A549 (cell line): ENCODE measurements at regions of chr2 and their contacts with region 1.

Region 1: GRCh38 chr2:199739413-199740110 is 111.4 kb downstream of the FTCDNL1 start:
- DNase-seq: peak; percentile 28 to 65
- ATAC-seq: peak; percentile 58 to 88; a peak in 4 of 6 replicates
- H3K4me3 ChIP-seq: no peak overlapping the region
- H3K27ac ChIP-seq: peak overlapping the region; percentile 36 to 61; a peak in 3 of 6 replicates
- H3K4me1 ChIP-seq: peaks cover 22% of the 10 kb centered on the region
- CTCF ChIP-seq: peak; percentile 88
- EP300 ChIP-seq: no peak
- POLR2A ChIP-seq: no peak
- RAD21 ChIP-seq: peak; percentile 92

Region 2: DNA sequence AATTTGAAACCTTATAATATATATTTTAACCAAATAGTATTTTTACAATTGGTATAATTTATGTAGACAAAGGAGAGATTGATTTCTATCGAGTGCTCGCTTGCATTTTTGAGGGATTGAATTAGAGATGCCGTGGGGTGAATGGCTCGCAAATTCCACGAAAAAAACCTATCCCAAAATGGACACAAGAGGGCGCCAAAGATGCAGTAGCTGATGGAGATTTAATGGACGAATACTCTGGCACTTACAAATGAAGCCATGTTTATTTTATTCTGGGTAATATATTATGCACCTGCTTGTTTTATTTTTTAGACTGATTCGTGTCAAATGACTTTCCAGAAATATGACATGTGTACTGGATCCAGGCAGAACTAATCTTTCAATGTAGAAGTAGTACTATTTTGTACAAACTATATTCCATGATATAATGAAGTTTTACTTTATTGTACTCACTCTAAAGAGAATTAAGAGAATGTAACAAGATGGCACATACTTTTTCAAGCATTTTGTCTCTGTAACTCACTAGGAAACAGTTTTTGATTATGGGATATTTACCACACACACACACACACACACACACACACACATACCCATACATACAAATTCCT is 1429.8 kb before region 1 on chr2:
- CTCF ChIA-PET with region 1: interaction called, 32 read pairs
- POLR2A ChIA-PET with region 1: no interaction called
- DNase-seq: peak; percentile 37
- ATAC-seq: peak in 1 of 2 experiments; percentile 77; a peak in 3 of 6 replicates
- H3K4me3 ChIP-seq: no peak overlapping the region
- H3K27ac ChIP-seq: no peak overlapping the region
- H3K4me1 ChIP-seq: no peaks in the 10 kb centered on the region
- CTCF ChIP-seq: peak; percentile 82
- EP300 ChIP-seq: no peak
- POLR2A ChIP-seq: no peak
- RAD21 ChIP-seq: peak; percentile 58 to 62; a peak in 4 of 5 replicates

Region 3: DNA sequence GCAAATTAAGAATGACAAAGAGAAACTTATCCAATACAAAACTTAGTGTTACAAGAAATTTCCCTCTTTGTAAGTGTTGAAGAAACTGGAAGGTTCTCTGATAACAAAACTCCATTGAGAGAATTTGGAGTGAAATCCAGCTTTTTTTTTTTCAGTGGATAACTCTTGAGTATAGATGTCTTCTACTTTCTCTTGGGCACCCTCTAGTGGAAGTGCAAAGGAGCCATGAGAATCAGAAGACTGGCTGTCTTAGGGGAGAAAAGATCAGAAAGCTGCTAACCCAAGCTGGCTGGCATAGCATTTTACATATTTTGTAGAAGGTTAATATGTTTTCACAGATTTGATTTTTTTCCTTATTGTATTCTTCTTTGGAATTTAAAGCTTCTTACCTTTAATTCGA is 143.0 kb before region 1 on chr2:
- CTCF ChIA-PET with region 1: interaction called, 10 read pairs
- POLR2A ChIA-PET with region 1: no interaction called
- DNase-seq: peak; percentile 6 to 44
- ATAC-seq: peak; percentile 71 to 89; a peak in 4 of 6 replicates
- H3K4me3 ChIP-seq: no peak overlapping the region
- H3K27ac ChIP-seq: no peak overlapping the region
- H3K4me1 ChIP-seq: no peaks in the 10 kb centered on the region
- CTCF ChIP-seq: peak; percentile 54
- EP300 ChIP-seq: no peak
- POLR2A ChIP-seq: no peak
- RAD21 ChIP-seq: peak; percentile 32 to 37; a peak in 2 of 5 replicates

Region 4: DNA sequence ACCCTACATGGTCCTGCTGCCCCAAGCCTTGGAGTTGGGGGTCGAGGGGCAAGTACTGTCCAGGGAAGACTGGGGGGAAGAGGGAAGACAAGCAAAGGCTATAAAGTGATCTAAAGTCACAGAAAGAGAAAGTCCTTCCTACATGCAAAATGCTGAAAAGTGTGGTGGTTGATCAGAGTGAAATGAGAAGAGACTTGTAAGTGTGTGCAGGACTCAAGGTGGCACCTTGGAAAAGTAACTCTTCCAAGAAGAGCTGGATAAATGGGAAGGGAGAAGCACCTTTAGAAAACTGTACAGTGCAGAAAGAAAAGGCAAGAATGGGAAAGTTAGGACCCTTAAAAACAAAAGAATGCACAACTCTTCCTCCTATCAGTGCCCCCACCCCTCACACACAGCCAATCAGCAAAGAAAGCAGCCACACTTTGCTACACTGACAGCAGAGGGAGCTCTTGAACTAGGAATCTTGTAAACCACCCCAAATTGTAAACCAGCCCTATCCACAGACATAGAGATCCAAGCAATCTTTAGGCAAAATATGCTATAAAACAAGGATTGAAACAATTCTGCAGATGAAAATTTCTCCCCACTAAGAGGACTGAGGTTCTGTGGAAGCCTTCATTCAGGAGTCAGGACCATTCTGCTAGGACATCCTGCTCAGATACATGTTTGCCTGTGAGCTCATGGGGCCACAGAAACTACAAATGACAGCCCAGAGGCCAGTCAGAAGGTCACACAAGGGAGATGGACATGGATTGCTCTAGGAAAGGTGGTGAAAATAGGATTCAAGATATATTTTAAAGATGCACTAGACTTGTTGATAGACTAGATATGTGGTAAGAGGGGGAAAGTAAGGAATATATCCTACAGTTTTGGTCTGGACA is 35.0 kb before region 1 on chr2:
- CTCF ChIA-PET with region 1: interaction called, 74 read pairs
- POLR2A ChIA-PET with region 1: no interaction called
- DNase-seq: peak; percentile 40 to 52
- ATAC-seq: peak; percentile 94 to 98
- H3K4me3 ChIP-seq: no peak overlapping the region
- H3K27ac ChIP-seq: no peak overlapping the region
- H3K4me1 ChIP-seq: no peaks in the 10 kb centered on the region
- CTCF ChIP-seq: peak; percentile 78
- EP300 ChIP-seq: no peak
- POLR2A ChIP-seq: no peak
- RAD21 ChIP-seq: peak; percentile 91

Region 5: GRCh38 chr2:199727306-199727705 is 12.3 kb before region 1 on chr2:
- CTCF ChIA-PET with region 1: interaction called, 20 read pairs
- POLR2A ChIA-PET with region 1: no interaction called
- DNase-seq: no peak
- ATAC-seq: no peak
- H3K4me3 ChIP-seq: no peak overlapping the region
- H3K27ac ChIP-seq: no peak overlapping the region
- H3K4me1 ChIP-seq: no peaks in the 10 kb centered on the region
- CTCF ChIP-seq: no peak
- EP300 ChIP-seq: no peak
- POLR2A ChIP-seq: no peak
- RAD21 ChIP-seq: no peak

Region 6: GRCh38 chr2:199757233-199757870 is 17.8 kb after region 1 on chr2:
- CTCF ChIA-PET with region 1: interaction called, 33 read pairs
- POLR2A ChIA-PET with region 1: no interaction called
- DNase-seq: no peak
- ATAC-seq: no peak
- H3K4me3 ChIP-seq: no peak overlapping the region
- H3K27ac ChIP-seq: no peak overlapping the region
- H3K4me1 ChIP-seq: no peaks in the 10 kb centered on the region
- CTCF ChIP-seq: no peak
- EP300 ChIP-seq: no peak
- POLR2A ChIP-seq: no peak
- RAD21 ChIP-seq: no peak